B cell (primary cell): ENCODE measurements at regions of chr3 and their contacts with region 1.

Region 1: GRCh38 chr3:120095226-120095978 is 1.2 kb upstream of the GSK3B start:
- DNase-seq: peak; percentile 90
- ATAC-seq: peak; percentile 15
- H3K4me3 ChIP-seq: peak overlapping the region; percentile 82 to 96 (median 87)
- H3K4me3 Mint-ChIP-seq: no peak overlapping the region
- H3K27ac ChIP-seq: peak overlapping the region; percentile 100
- H3K27ac Mint-ChIP-seq: no peak overlapping the region
- H3K4me1 ChIP-seq: peaks cover 25 to 30% of the 10 kb centered on the region in 2 donors
- H3K4me1 Mint-ChIP-seq: peaks cover 8% of the 10 kb centered on the region
- H3K27me3 ChIP-seq: no peaks in the 10 kb centered on the region
- H3K27me3 Mint-ChIP-seq: no peaks in the 10 kb centered on the region
- CTCF ChIP-seq: no peak

Region 2: DNA sequence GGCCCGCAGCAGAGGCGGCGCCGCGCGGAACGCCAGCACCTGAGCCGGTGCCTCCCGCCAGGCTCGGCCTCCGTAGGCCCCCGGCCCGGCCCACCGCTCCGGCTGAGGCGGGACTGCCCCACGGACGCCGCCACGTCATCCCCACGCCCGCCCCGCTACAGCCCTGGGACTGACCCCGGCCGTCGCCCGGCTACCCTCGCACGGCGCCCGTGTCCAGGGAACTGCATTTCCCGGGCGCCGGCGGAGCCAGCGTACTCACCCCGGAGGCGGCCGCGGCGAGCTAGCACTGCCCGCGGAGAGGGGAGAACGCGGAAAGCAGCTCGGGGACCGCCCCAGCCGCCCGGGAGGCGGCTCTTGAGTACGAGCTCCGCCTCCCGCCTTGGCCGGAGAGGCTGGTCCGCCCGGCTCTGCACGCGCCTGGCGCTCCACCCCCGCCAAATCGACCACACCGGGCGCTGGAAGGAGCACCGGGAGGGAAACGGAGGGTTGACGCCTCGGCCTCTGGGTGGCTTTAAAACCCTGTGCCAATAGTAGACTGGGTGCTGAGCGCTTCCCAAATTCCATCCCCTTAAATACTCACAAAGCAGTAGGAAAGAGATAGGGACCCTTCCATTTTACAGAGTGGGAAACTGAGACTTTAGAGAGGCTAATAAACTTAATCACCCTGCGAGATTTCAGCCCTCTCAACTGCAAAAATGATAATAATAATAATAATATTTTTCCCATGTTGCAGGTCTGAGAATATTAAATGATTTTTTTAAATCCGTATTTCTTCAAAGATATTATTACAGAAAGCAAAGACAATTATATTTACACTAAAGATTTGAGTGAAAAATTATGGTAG is 854.6 kb before region 1 on chr3 and contains the start of gene B4GALT4:
- CTCF ChIA-PET with region 1: no interaction called
- POLR2A ChIA-PET with region 1: interaction called, 4 read pairs
- intact Hi-C with region 1: loop called (anchors 2 kb)
- DNase-seq: peak; percentile 83
- ATAC-seq: peak; percentile 90
- H3K4me3 ChIP-seq: peak within 1 kb of the TSS; percentile 57 to 82 (median 72)
- H3K4me3 Mint-ChIP-seq: peak within 1 kb of the TSS; percentile 86
- H3K27ac ChIP-seq: peak within 1 kb of the TSS; percentile 62 to 93
- H3K27ac Mint-ChIP-seq: peak within 1 kb of the TSS; percentile 81
- H3K4me1 ChIP-seq: peaks cover 30 to 34% of the 10 kb centered on the region in 2 donors
- H3K4me1 Mint-ChIP-seq: peaks cover 30% of the 10 kb centered on the region
- H3K27me3 ChIP-seq: no peaks in the 10 kb centered on the region
- H3K27me3 Mint-ChIP-seq: no peaks in the 10 kb centered on the region
- CTCF ChIP-seq: no peak
- total RNA-seq, gene B4GALT4: 19.3 and 21.9 TPM in 2 replicates

Region 3: GRCh38 chr3:119322835-119323722 is 772.3 kb before region 1 on chr3:
- CTCF ChIA-PET with region 1: no interaction called
- POLR2A ChIA-PET with region 1: no interaction called
- intact Hi-C with region 1: loop called (anchors 1 kb)
- DNase-seq: peak; percentile 97
- ATAC-seq: peak; percentile 86
- H3K4me3 ChIP-seq: peak overlapping the region; percentile 44 to 86 (median 61)
- H3K4me3 Mint-ChIP-seq: peak overlapping the region; percentile 88
- H3K27ac ChIP-seq: peak overlapping the region; percentile 86 to 87
- H3K27ac Mint-ChIP-seq: peak overlapping the region; percentile 93
- H3K4me1 ChIP-seq: peaks cover 13 to 22% of the 10 kb centered on the region in 2 donors
- H3K4me1 Mint-ChIP-seq: peaks cover 48% of the 10 kb centered on the region
- H3K27me3 ChIP-seq: no peaks in the 10 kb centered on the region
- H3K27me3 Mint-ChIP-seq: no peaks in the 10 kb centered on the region
- CTCF ChIP-seq: no peak

Region 4: DNA sequence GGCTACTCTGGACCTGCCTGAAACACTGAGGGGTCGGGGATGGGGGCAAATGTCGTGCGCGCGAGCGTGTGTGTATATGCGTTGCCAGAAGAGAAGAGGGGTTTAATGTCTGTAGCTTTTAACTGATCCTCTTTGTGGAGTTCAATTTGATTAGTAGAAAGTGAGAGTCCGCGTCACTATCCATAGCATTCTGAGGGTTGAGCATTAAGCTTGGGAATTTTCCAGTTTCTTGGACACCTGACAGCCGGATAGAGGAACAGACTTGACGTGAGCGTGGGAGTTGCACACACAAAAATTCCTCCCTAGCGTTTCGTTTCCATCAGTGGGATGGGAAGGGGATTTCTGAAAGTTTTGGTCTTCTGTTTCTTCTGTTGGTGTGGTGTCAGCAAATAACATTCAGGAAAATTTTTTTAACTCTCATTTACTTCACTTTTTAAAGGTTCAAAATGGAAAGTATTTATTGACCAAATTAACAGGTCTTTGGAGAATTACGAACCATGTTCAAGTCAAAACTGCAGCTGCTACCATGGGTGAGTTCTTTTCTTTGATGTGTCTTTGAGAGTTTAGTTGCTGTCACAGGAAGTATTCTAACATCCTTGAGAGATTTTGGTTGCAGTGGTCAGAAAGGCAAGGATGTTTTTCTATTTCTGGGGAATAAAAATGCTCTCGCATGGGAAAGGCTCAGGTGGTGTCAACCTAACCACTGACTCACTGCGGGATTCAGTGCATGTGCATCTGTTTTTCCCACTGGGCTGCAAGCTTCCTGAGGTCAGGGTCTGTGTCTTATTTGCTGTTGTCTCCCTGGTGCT is 625.8 kb before region 1 on chr3:
- CTCF ChIA-PET with region 1: no interaction called
- POLR2A ChIA-PET with region 1: no interaction called
- intact Hi-C with region 1: loop called (anchors 1 kb)
- DNase-seq: no peak
- ATAC-seq: peak; percentile 39
- H3K4me3 ChIP-seq: peak overlapping the region; percentile 82 to 98 (median 94)
- H3K4me3 Mint-ChIP-seq: peak overlapping the region; percentile 98
- H3K27ac ChIP-seq: peak overlapping the region; percentile 16 to 74
- H3K27ac Mint-ChIP-seq: peak overlapping the region; percentile 85
- H3K4me1 ChIP-seq: peaks cover 16 to 23% of the 10 kb centered on the region in 2 donors
- H3K4me1 Mint-ChIP-seq: peaks cover 29% of the 10 kb centered on the region
- H3K27me3 ChIP-seq: no peaks in the 10 kb centered on the region
- H3K27me3 Mint-ChIP-seq: no peaks in the 10 kb centered on the region
- CTCF ChIP-seq: no peak

Region 5: GRCh38 chr3:119702530-119703157 is 392.8 kb before region 1 on chr3 and contains the start of gene CFAP91:
- CTCF ChIA-PET with region 1: no interaction called
- POLR2A ChIA-PET with region 1: interaction called, 3 read pairs
- intact Hi-C with region 1: loop called (anchors 2 kb)
- DNase-seq: peak; percentile 93
- ATAC-seq: peak; percentile 95
- H3K4me3 ChIP-seq: peak within 1 kb of the TSS in 4 of 5 experiments; percentile 47 to 67 (median 62)
- H3K4me3 Mint-ChIP-seq: peak within 1 kb of the TSS; percentile 88
- H3K27ac ChIP-seq: peak within 1 kb of the TSS in 1 of 2 donors; percentile 37
- H3K27ac Mint-ChIP-seq: peak within 1 kb of the TSS; percentile 82
- H3K4me1 ChIP-seq: peaks cover 25 to 32% of the 10 kb centered on the region in 2 donors
- H3K4me1 Mint-ChIP-seq: peaks cover 39% of the 10 kb centered on the region
- H3K27me3 ChIP-seq: no peaks in the 10 kb centered on the region
- H3K27me3 Mint-ChIP-seq: no peaks in the 10 kb centered on the region
- CTCF ChIP-seq: no peak
- total RNA-seq, gene CFAP91: 6.4 and 7.2 TPM in 2 replicates

Region 6: GRCh38 chr3:120057626-120058025 is 37.8 kb before region 1 on chr3:
- CTCF ChIA-PET with region 1: no interaction called
- POLR2A ChIA-PET with region 1: interaction called, 4 read pairs
- intact Hi-C with region 1: loop called (anchors 5 kb)
- DNase-seq: no peak
- ATAC-seq: no peak
- H3K4me3 ChIP-seq: no peak overlapping the region
- H3K4me3 Mint-ChIP-seq: no peak overlapping the region
- H3K27ac ChIP-seq: no peak overlapping the region
- H3K27ac Mint-ChIP-seq: no peak overlapping the region
- H3K4me1 ChIP-seq: peaks cover 12 to 32% of the 10 kb centered on the region in 2 donors
- H3K4me1 Mint-ChIP-seq: peaks cover 50% of the 10 kb centered on the region
- H3K27me3 ChIP-seq: no peaks in the 10 kb centered on the region
- H3K27me3 Mint-ChIP-seq: no peaks in the 10 kb centered on the region
- CTCF ChIP-seq: no peak

Region 7: DNA sequence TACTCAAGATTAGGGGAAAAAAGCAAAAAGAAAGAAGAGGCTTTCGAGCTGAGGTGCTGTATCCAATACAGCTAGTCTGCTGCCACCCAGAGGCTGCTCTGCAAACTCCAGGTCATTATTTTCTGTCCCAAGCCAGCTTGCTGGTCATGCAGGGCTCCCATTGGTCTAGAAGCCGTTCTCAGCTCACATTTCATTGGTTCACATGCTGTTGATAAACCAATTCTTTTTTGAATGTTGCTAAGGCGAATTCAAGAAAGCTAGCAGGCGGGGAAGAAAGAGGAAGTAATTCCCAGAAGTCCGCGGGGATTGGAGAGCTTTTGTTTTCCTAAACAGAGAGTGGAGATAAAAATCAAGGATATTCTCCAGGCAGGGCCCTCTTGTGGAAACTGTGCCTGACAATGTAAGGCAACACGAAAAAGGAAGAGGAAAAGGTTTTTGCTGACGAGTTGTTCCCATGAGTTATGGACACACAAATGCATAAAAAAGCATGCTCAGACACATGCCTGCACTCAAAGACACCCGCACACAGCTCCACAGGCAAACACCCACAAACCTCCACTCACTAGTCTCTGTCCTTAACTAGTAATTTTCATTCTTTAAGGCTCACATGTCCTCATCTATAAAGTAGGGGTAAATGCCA is 322.0 kb after region 1 on chr3:
- CTCF ChIA-PET with region 1: interaction called, 6 read pairs
- POLR2A ChIA-PET with region 1: interaction called, 3 read pairs
- intact Hi-C with region 1: loop called (anchors 1 kb)
- DNase-seq: peak; percentile 92
- ATAC-seq: peak; percentile 100
- H3K4me3 ChIP-seq: peak overlapping the region; percentile 39 to 76 (median 54)
- H3K4me3 Mint-ChIP-seq: peak overlapping the region; percentile 82
- H3K27ac ChIP-seq: no peak overlapping the region
- H3K27ac Mint-ChIP-seq: peak overlapping the region; percentile 2
- H3K4me1 ChIP-seq: peaks cover 7 to 14% of the 10 kb centered on the region in 2 donors
- H3K4me1 Mint-ChIP-seq: peaks cover 21% of the 10 kb centered on the region
- H3K27me3 ChIP-seq: no peaks in the 10 kb centered on the region
- H3K27me3 Mint-ChIP-seq: no peaks in the 10 kb centered on the region
- CTCF ChIP-seq: peak; percentile 86